Dorsolateral prefrontal cortex (tissue), 120 donors: ENCODE measurements at regions of chr15 and their contacts with region 1.

Region 1: GRCh38 chr15:34514251-34514670 is 69.2 kb downstream of the GOLGA8B start:
- DNase-seq: peak in 2 of 10 donors; percentile 4 to 42
- H3K4me3 ChIP-seq: peak overlapping the region in 57 of 59 donors; percentile 37 to 78 (median 64)
- H3K27ac ChIP-seq: peak overlapping the region in 12 of 59 donors; percentile 13 to 78 (median 48)
- H3K27me3 ChIP-seq: peaks cover 0 to 50% (median 21%) of the 10 kb centered on the region in 45 donors
- CTCF ChIP-seq: no peak

Region 2: GRCh38 chr15:34594361-34594760 is 80.1 kb after region 1 on chr15:
- intact Hi-C with region 1: loop called (anchors 5 to 10 kb)
- DNase-seq: no peak
- H3K4me3 ChIP-seq: no peak overlapping the region
- H3K27ac ChIP-seq: no peak overlapping the region
- H3K27me3 ChIP-seq: no peaks in the 10 kb centered on the region
- CTCF ChIP-seq: no peak

Region 3: GRCh38 chr15:34650177-34650576 is 135.9 kb after region 1 on chr15:
- intact Hi-C with region 1: no loop called
- DNase-seq: no peak
- H3K4me3 ChIP-seq: no peak overlapping the region
- H3K27ac ChIP-seq: no peak overlapping the region
- H3K27me3 ChIP-seq: peaks cover 0 to 8% (median 0%) of the 10 kb centered on the region in 45 donors
- CTCF ChIP-seq: no peak